ENCODE measurements at regions of chr3 and their contacts with region 1.

Region 1: DNA sequence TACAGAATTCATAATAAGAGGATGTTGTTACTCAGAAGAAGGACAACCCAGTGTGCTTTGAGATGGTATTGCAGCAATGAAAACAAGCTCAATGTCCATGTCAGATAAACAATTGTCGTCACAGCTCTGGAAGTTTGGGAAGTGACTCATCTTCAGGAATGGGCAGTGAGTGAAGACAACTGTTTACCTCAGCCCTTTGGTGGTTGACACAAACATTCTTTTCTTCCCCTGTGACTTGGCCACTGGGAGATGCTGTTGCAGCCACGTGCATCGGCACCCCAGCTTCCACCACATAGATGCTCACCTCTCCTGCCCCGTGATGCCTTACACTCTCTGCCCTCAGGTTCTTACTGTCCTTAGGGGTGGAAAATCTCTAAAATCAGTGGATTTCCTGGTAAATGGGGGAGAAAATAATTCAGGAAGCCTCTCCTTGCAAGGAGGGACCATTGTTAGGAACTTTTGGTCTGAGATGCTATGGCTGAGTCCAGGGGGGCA is 114.1 kb upstream of the GALNT15 start:
- DNase-seq: peak; percentile 77 to 98
- H3K4me3 ChIP-seq: no peak overlapping the region; the same call in 1 of the 2 replicates
- H3K27ac ChIP-seq: peak overlapping the region; percentile 77
- H3K4me1 ChIP-seq: peaks cover 44% of the 10 kb centered on the region
- H3K27me3 ChIP-seq: no peaks in the 10 kb centered on the region
- CTCF ChIP-seq: no peak

Region 2: DNA sequence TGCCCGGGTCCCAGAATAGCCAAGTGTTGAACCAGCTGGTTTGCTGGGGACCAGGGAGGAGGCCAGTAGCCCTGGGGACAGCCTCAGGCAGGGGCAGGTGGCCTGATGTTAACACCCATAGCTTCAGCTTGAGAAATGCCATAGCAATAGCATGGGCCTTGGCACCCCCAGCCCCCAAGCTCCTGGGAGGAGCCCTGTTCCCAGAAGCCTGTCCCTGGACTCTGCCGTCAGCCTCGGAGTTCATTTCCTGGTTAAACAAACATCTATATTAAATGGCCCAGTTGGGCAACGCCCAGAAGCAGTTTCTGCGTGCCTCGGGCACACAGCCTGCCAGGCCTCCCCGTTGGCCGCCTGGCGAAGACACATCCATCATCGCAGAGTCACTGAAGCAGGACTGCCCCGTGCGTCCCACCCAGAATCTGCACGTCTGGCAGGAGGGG is 1183.5 kb before region 1 on chr3:
- CTCF ChIA-PET with region 1: no interaction called
- POLR2A ChIA-PET with region 1: interaction called, 14 read pairs
- intact Hi-C with region 1: no loop called
- DNase-seq: peak; percentile 68 to 85
- H3K4me3 ChIP-seq: no peak overlapping the region; the same call in 1 of the 2 replicates
- H3K27ac ChIP-seq: 0 out of 2 replicates have a peak overlapping the region, but pooled peaks have one; percentile 38
- H3K4me1 ChIP-seq: peaks cover 14% of the 10 kb centered on the region
- H3K27me3 ChIP-seq: no peaks in the 10 kb centered on the region
- CTCF ChIP-seq: no peak

Region 3: GRCh38 chr3:15636003-15636709 is 424.2 kb before region 1 on chr3:
- CTCF ChIA-PET with region 1: no interaction called
- POLR2A ChIA-PET with region 1: no interaction called
- intact Hi-C with region 1: loop called (anchors 2 kb)
- DNase-seq: peak; percentile 70 to 93
- H3K4me3 ChIP-seq: peak overlapping the region; percentile 46; the same call in 1 of the 2 replicates
- H3K27ac ChIP-seq: peak overlapping the region; percentile 95
- H3K4me1 ChIP-seq: peaks cover 81% of the 10 kb centered on the region
- H3K27me3 ChIP-seq: no peaks in the 10 kb centered on the region
- CTCF ChIP-seq: no peak

Region 4: GRCh38 chr3:16048435-16049318 is 11.7 kb before region 1 on chr3:
- CTCF ChIA-PET with region 1: interaction called, 10 read pairs
- POLR2A ChIA-PET with region 1: no interaction called
- intact Hi-C with region 1: no loop called
- DNase-seq: peak; percentile 25 to 36
- H3K4me3 ChIP-seq: peak overlapping the region; percentile 30; the same call in 1 of the 2 replicates
- H3K27ac ChIP-seq: no peak overlapping the region
- H3K4me1 ChIP-seq: no peaks in the 10 kb centered on the region
- H3K27me3 ChIP-seq: no peaks in the 10 kb centered on the region
- CTCF ChIP-seq: peak; percentile 93

Region 5: GRCh38 chr3:16101813-16102561 is 41.6 kb after region 1 on chr3:
- CTCF ChIA-PET with region 1: no interaction called
- POLR2A ChIA-PET with region 1: no interaction called
- intact Hi-C with region 1: loop called (anchors 1 kb)
- DNase-seq: no peak
- H3K4me3 ChIP-seq: peak overlapping the region; percentile 20; the same call in 1 of the 2 replicates
- H3K27ac ChIP-seq: peak overlapping the region; percentile 94
- H3K4me1 ChIP-seq: peaks cover 11% of the 10 kb centered on the region
- H3K27me3 ChIP-seq: no peaks in the 10 kb centered on the region
- CTCF ChIP-seq: no peak

Region 6: GRCh38 chr3:16229681-16230080 is 169.3 kb after region 1 on chr3:
- CTCF ChIA-PET with region 1: no interaction called
- POLR2A ChIA-PET with region 1: interaction called, 12 read pairs
- intact Hi-C with region 1: no loop called
- DNase-seq: no peak
- H3K4me3 ChIP-seq: no peak overlapping the region
- H3K27ac ChIP-seq: no peak overlapping the region
- H3K4me1 ChIP-seq: no peaks in the 10 kb centered on the region
- H3K27me3 ChIP-seq: no peaks in the 10 kb centered on the region
- CTCF ChIP-seq: no peak

Region 7: GRCh38 chr3:16240283-16241023 is 180.0 kb after region 1 on chr3:
- CTCF ChIA-PET with region 1: interaction called, 5 read pairs
- POLR2A ChIA-PET with region 1: no interaction called
- intact Hi-C with region 1: loop called (anchors 5 kb)
- DNase-seq: peak in 1 of 2 experiments; percentile 50
- H3K4me3 ChIP-seq: no peak overlapping the region
- H3K27ac ChIP-seq: no peak overlapping the region
- H3K4me1 ChIP-seq: peaks cover 16% of the 10 kb centered on the region
- H3K27me3 ChIP-seq: no peaks in the 10 kb centered on the region
- CTCF ChIP-seq: no peak

Measured in PC-9 (cell line).